Activated naive CD4-positive, alpha-beta T cell treated with anti-CD3 and anti-CD28 coated beads for 36 hours (primary cell): ENCODE measurements at regions of chr14 and their contacts with region 1.

Region 1: GRCh38 chr14:94036313-94037050 is 10.3 kb downstream of the OTUB2 start:
- DNase-seq: peak; percentile 88
- H3K4me3 Mint-ChIP-seq: no peak overlapping the region
- H3K27ac Mint-ChIP-seq: no peak overlapping the region
- H3K4me1 Mint-ChIP-seq: peaks cover 3% of the 10 kb centered on the region
- H3K27me3 Mint-ChIP-seq: no peaks in the 10 kb centered on the region

Region 2: DNA sequence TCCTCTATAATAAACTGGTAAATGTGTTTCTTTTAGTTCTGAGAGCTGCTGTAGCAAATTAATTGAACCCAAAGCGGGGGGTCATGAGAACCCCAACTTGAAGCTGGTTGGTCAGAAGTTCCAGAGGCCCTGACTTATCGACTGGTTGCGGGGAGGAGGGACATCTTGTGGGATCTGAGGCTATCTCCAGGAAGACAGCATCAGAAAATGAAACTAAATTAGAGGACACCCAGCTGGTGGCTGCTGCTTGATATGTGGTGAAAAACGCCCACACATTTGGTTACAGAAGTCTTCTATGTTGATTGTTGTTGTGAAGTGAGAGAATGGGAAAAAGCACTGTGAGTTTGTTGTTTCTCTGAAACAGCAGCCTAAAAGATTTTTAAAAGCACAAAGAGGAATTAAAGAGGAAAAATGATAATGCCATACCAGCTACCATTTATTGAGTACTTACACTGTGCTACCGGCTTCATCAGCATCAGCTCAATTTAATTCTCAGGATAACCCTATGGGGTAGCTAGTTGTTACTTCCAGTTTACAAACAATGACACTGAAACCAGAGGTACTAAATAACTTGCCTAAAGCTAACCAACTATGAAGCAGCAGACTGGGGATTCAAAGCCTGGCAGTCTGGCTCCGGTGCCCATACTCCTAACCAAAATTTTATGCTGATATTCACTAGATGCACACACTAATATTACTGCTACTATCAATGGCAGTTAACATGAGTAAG is 20.3 kb after region 1 on chr14:
- CTCF ChIA-PET with region 1: interaction called, 15 read pairs
- intact Hi-C with region 1: no loop called
- DNase-seq: peak; percentile 19
- H3K4me3 Mint-ChIP-seq: no peak overlapping the region
- H3K27ac Mint-ChIP-seq: peak overlapping the region; percentile 83
- H3K4me1 Mint-ChIP-seq: peaks cover 43% of the 10 kb centered on the region
- H3K27me3 Mint-ChIP-seq: no peaks in the 10 kb centered on the region

Region 3: DNA sequence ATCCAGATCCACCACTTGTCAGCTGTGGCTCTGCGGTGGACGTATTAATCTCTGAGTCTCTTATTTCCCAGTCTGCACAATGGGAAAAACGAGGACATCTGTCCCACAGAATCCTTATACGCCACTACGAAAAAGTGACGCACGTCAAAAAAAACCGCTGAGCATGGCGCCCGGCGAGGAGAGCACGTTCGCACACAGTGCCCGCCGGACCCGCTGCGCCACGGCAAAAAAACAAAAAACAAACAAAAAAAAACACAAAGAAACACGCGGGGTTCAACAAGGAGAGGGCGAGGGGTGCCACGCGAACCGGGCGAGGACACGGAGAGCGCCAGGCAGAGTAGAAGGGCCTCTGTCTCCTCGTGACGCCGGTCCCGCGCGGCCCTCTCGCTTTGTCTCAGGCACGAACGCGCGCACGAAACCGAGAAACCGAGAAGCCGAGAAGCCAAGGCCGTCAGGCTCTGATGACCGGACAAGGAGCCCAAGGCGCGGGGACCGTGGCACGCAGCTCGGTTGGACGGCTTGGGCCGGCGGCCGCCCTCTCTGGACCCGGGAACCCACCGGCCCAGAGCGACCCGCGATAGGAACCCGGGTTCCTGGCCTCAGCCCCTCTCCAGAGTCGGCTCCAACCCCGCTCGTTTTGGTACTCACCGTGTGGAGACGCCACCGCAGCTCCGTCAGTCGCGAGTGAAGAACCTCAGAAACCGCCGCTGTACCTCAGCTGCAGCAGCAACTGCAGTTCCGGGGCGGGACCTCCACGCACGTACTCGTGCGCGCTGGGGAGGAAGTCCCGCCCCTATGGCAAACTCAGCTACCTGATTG is 44.2 kb after region 1 on chr14 and contains the start of gene DDX24:
- CTCF ChIA-PET with region 1: interaction called, 13 read pairs
- intact Hi-C with region 1: no loop called
- DNase-seq: peak; percentile 98
- H3K4me3 Mint-ChIP-seq: peak within 1 kb of the TSS; percentile 98
- H3K27ac Mint-ChIP-seq: peak within 1 kb of the TSS; percentile 98
- H3K4me1 Mint-ChIP-seq: peaks cover 44% of the 10 kb centered on the region
- H3K27me3 Mint-ChIP-seq: no peaks in the 10 kb centered on the region
- total RNA-seq, gene DDX24: 190 to 200 TPM

Region 4: GRCh38 chr14:94136575-94137331 is 100.3 kb after region 1 on chr14:
- CTCF ChIA-PET with region 1: interaction called, 108 read pairs
- intact Hi-C with region 1: loop called (anchors 1 kb)
- DNase-seq: peak; percentile 95
- H3K4me3 Mint-ChIP-seq: no peak overlapping the region
- H3K27ac Mint-ChIP-seq: no peak overlapping the region
- H3K4me1 Mint-ChIP-seq: peaks cover 2% of the 10 kb centered on the region
- H3K27me3 Mint-ChIP-seq: no peaks in the 10 kb centered on the region

Region 5: GRCh38 chr14:94307410-94307992 is 271.0 kb after region 1 on chr14:
- CTCF ChIA-PET with region 1: interaction called, 4 read pairs
- intact Hi-C with region 1: loop called (anchors 2 kb)
- DNase-seq: no peak
- H3K4me3 Mint-ChIP-seq: no peak overlapping the region
- H3K27ac Mint-ChIP-seq: no peak overlapping the region
- H3K4me1 Mint-ChIP-seq: no peaks in the 10 kb centered on the region
- H3K27me3 Mint-ChIP-seq: peaks cover 15% of the 10 kb centered on the region